Activated naive CD4-positive, alpha-beta T cell treated with anti-CD3 and anti-CD28 coated beads for 36 hours (primary cell): ENCODE measurements at regions of chr1 and their contacts with region 1.

Region 1: DNA sequence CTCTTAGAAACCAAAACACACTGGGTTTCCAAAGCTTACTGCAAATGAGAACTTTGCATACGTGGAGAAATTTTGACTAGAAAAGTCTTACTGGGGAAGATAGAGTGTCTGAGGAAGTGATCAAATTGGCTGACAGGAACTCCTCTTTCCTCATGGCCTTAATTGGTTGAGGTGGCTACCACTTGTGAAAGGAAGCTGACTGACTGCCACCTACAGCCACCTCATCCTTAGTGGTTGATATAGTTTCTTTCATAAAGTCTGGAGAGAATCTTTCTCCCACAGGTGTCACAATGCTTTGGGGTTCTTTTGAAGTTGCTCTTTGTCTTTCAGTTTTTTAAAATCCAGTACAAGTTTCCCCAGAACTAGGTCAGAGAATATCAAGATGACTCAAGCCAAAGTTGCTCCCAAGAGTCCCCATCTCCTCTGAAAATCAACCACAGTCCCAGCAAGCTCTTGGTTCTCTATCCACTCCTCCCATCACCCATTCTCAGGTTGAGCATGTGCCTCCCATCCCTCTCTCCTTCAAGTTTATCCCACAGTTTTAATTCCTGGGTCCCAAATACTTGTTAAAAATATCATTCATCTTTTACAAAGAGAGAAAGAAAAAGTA is 43.3 kb downstream of the GPR88 start:
- DNase-seq: peak; percentile 52
- H3K4me3 Mint-ChIP-seq: no peak overlapping the region
- H3K27ac Mint-ChIP-seq: no peak overlapping the region
- H3K4me1 Mint-ChIP-seq: peaks cover 8% of the 10 kb centered on the region
- H3K27me3 Mint-ChIP-seq: no peaks in the 10 kb centered on the region

Region 2: GRCh38 chr1:100265931-100266740 is 315.1 kb before region 1 on chr1 and contains the start of gene RTCA:
- CTCF ChIA-PET with region 1: no interaction called
- intact Hi-C with region 1: no loop called
- DNase-seq: peak; percentile 96
- H3K4me3 Mint-ChIP-seq: peak within 1 kb of the TSS; percentile 100
- H3K27ac Mint-ChIP-seq: peak within 1 kb of the TSS; percentile 96
- H3K4me1 Mint-ChIP-seq: peaks cover 35% of the 10 kb centered on the region
- H3K27me3 Mint-ChIP-seq: no peaks in the 10 kb centered on the region
- total RNA-seq, gene RTCA: 36.7 to 37.5 TPM

Region 3: GRCh38 chr1:100622037-100622436 is 40.8 kb after region 1 on chr1:
- CTCF ChIA-PET with region 1: no interaction called
- intact Hi-C with region 1: loop called (anchors 1 kb)
- DNase-seq: peak; percentile 40
- H3K4me3 Mint-ChIP-seq: no peak overlapping the region
- H3K27ac Mint-ChIP-seq: no peak overlapping the region
- H3K4me1 Mint-ChIP-seq: peaks cover 9% of the 10 kb centered on the region
- H3K27me3 Mint-ChIP-seq: no peaks in the 10 kb centered on the region